Activated CD8-positive, alpha-beta T cell treated with anti-CD3 and anti-CD28 coated beads for 36 hours (primary cell): ENCODE measurements at regions of chr12 and their contacts with region 1.

Region 1: DNA sequence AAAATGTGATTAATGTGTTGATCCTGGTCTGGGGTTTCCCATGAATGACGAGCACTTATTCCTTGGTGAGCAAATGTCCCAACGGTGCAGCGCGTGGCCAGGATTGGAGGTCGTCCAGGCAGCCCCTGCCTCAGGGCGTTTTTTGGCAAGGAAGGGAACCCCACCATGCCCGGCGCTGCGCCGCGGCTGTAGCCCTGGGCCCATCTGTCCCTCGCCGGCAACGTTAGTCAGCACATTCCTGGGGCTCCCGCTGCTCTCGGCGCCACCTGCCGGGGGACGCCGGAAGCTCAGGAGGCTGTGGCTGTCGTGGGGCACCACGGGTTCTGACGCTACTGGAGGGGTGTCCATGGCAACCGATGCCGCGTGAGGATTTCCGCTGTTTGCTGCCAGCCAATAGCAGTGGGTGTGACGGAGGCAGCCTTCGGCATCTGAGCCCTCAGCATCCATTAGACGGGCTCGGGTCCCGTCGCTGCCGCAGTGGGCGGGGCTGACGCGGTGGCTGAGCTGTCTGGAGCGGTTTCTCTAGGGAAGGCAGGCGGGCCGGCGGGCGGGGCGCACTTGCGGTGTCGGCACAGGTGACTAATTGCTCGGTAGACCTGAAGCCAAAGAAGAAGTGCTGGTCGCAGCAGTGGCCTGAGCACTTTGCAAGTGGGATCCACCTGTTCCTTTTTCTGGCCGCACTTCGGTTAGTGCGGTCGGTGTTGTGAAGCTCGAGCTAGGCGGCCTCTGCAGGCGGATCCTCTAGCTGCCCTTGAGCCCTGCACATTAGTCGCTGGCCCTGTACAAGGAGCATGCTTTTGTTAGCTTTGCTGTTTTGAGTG is 29.5 kb downstream of the RAB35 start:
- DNase-seq: peak; percentile 100
- ATAC-seq: peak; percentile 97
- H3K4me3 Mint-ChIP-seq: peak overlapping the region; percentile 64
- H3K27ac Mint-ChIP-seq: peak overlapping the region; percentile 88
- H3K4me1 Mint-ChIP-seq: peaks cover 32% of the 10 kb centered on the region
- H3K27me3 Mint-ChIP-seq: no peaks in the 10 kb centered on the region
- CTCF ChIP-seq: peak; percentile 95

Region 2: DNA sequence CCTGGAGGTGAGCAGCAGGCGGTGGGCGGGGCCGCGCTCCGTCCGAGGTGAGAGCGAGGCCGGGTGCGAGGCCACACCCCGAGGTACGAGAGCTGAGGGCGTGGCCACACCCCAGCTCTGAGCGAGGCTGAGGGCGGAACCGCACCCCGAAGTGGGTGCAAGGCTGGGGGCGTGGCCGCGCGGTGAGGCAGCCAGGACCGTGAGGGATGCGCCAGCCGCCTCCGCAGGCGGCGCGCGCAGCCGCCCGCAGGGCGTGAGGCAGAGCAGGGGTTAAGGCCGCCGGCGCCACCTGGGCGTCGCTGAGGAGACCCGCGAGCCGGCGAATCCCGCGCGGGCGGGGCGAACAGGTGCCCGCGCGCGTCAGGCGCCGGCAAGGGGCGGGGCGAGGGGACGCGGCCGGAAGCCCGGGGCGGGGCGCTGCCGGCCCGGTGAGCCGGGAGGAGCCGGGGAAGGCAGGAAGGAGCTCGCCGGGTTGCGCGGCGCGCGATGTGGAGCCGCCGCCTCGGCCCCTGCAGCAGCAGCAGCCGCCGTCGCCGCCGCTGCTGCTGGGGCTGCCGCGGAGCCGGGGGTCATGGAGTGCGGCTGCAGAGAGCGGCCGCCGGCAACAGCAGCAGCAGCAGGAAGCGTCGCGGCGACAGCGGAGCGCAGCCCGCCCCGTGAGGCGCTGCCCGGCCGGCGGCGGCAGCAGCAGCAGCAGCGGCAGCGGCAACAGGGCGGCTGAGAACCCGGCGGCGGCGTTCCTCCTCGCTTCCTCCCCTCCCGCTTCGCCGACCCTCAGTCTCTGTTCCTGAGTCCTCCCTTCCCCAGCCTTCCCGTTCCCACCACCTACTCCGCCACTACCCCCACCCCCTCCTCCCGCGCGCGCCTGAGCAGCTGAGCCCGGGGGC is 98.0 kb before region 1 on chr12 and contains the start of gene BICDL1:
- CTCF ChIA-PET with region 1: interaction called, 23 read pairs
- POLR2A ChIA-PET with region 1: interaction called, 5 read pairs
- intact Hi-C with region 1: loop called (anchors 2 kb)
- DNase-seq: peak; percentile 98
- ATAC-seq: peak; percentile 89
- H3K4me3 Mint-ChIP-seq: peak within 1 kb of the TSS; percentile 89
- H3K27ac Mint-ChIP-seq: peak within 1 kb of the TSS; percentile 90
- H3K4me1 Mint-ChIP-seq: peaks cover 40% of the 10 kb centered on the region
- H3K27me3 Mint-ChIP-seq: no peaks in the 10 kb centered on the region
- CTCF ChIP-seq: no peak
- total RNA-seq, gene BICDL1: 103 to 107 TPM